ENCODE measurements at regions of chr15 and their contacts with region 1.

Region 1: DNA sequence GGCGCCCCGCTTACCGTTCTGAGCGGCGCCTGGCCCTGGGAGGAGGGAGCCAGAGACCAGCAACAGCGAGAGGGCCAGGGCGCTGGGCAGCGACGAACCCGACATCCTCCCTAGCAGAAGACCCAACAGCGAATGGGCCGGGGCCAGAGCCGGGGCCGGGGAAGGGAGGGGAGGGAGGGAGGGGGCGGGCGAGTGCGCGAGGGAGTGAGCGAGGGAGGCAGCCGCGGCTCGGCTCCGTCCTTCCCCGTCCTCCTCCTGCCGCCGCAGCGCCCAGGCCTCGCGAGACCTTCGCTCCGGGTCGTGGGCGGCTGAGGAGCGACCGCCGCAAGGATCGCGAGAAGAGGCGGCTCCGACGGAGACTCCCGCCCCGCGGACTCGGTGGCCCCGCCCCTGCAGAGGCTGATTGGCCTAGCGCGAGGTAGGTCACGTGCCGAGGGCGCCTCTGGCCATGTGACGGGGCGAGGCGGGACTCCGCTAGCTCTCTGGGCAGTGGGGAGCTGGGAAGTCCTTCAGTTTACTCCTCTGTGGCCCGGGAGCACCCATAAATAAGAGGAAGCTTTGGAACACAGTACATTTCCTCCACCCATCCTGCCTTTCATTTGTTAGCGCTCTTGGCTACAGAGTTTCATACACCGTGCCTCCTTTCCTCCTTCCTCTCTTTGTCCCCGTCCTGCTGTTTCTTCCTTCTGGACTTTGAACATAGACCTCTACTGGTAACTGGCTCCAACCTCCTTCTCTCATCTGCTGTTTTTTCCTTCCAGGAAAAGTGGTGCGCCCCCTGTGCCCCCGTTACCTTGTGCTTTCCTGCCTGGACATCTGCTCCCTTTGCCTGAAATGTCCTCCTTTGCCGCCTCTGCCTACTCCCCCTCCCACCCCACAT is at the start of gene NPTN:
- DNase-seq: peak; percentile 96 to 98
- ATAC-seq: peak; percentile 87 to 94
- H3K4me3 ChIP-seq: peak within 1 kb of the TSS; percentile 96
- H3K27ac ChIP-seq: peak within 1 kb of the TSS; percentile 95 to 96
- H3K4me1 ChIP-seq: peaks cover 51% of the 10 kb centered on the region
- CTCF ChIP-seq: peak; percentile 13; the same call in 1 of the 3 replicates
- EP300 ChIP-seq: no peak
- POLR2A ChIP-seq: peak; percentile 87
- RAD21 ChIP-seq: no peak
- polyA plus RNA-seq, gene NPTN: 201 and 253 TPM in 2 replicates

Region 2: GRCh38 chr15:73105064-73105463 is 528.3 kb before region 1 on chr15:
- CTCF ChIA-PET with region 1: no interaction called
- POLR2A ChIA-PET with region 1: no interaction called
- DNase-seq: no peak
- ATAC-seq: no peak
- H3K4me3 ChIP-seq: no peak overlapping the region
- H3K27ac ChIP-seq: no peak overlapping the region
- H3K4me1 ChIP-seq: no peaks in the 10 kb centered on the region
- CTCF ChIP-seq: no peak
- EP300 ChIP-seq: no peak
- POLR2A ChIP-seq: no peak
- RAD21 ChIP-seq: no peak

Region 3: GRCh38 chr15:73305331-73306211 is 327.8 kb before region 1 on chr15:
- CTCF ChIA-PET with region 1: interaction called, 79 read pairs
- POLR2A ChIA-PET with region 1: no interaction called
- DNase-seq: peak; percentile 81 to 86
- ATAC-seq: peak; percentile 91 to 95
- H3K4me3 ChIP-seq: no peak overlapping the region
- H3K27ac ChIP-seq: no peak overlapping the region
- H3K4me1 ChIP-seq: no peaks in the 10 kb centered on the region
- CTCF ChIP-seq: peak; percentile 83
- EP300 ChIP-seq: no peak
- POLR2A ChIP-seq: no peak
- RAD21 ChIP-seq: peak; percentile 89 to 95

Region 4: GRCh38 chr15:73573572-73573971 is 59.8 kb before region 1 on chr15:
- CTCF ChIA-PET with region 1: interaction called, 211 read pairs
- POLR2A ChIA-PET with region 1: interaction called, 3 read pairs
- DNase-seq: no peak
- ATAC-seq: no peak
- H3K4me3 ChIP-seq: no peak overlapping the region
- H3K27ac ChIP-seq: no peak overlapping the region
- H3K4me1 ChIP-seq: no peaks in the 10 kb centered on the region
- CTCF ChIP-seq: no peak
- EP300 ChIP-seq: no peak
- POLR2A ChIP-seq: no peak
- RAD21 ChIP-seq: no peak

Region 5: GRCh38 chr15:73601451-73602445 is 31.6 kb before region 1 on chr15:
- CTCF ChIA-PET with region 1: interaction called, 99 read pairs
- POLR2A ChIA-PET with region 1: interaction called, 21 read pairs
- DNase-seq: peak; percentile 17 to 42
- ATAC-seq: peak; percentile 74 to 86
- H3K4me3 ChIP-seq: 0 out of 3 replicates have a peak overlapping the region, but pooled peaks have one; percentile 12
- H3K27ac ChIP-seq: peak overlapping the region; percentile 45 to 62
- H3K4me1 ChIP-seq: peaks cover 41% of the 10 kb centered on the region
- CTCF ChIP-seq: no peak
- EP300 ChIP-seq: no peak
- POLR2A ChIP-seq: no peak
- RAD21 ChIP-seq: no peak

Region 6: GRCh38 chr15:73660455-73660854 is 27.1 kb after region 1 on chr15:
- CTCF ChIA-PET with region 1: interaction called, 17 read pairs
- POLR2A ChIA-PET with region 1: no interaction called
- DNase-seq: no peak
- ATAC-seq: no peak
- H3K4me3 ChIP-seq: no peak overlapping the region
- H3K27ac ChIP-seq: no peak overlapping the region
- H3K4me1 ChIP-seq: no peaks in the 10 kb centered on the region
- CTCF ChIP-seq: no peak
- EP300 ChIP-seq: no peak
- POLR2A ChIP-seq: no peak
- RAD21 ChIP-seq: no peak

Region 7: DNA sequence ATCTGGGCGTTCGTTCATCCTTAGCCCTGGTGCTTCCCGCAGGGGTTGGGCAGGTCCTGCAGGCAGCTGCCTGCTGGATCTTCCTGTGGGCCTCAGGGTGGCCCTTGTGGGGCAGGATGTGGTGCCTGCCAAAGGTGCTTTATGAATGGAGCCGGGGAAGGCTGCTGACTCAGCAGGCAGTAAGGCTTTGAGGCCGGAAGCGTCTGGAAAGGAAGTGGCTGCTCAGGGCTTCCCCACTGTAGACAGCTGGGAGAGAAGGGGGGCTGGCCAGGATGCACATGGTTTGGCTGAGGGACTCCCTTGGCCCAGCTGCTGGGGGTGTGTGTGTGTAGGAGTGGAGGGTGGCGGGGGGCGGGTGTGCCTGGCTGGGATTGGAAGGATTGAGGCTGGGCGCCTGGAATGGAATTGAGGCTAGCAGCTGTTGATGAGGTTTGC is 63.7 kb after region 1 on chr15:
- CTCF ChIA-PET with region 1: interaction called, 214 read pairs
- POLR2A ChIA-PET with region 1: interaction called, 5 read pairs
- DNase-seq: no peak
- ATAC-seq: no peak
- H3K4me3 ChIP-seq: no peak overlapping the region
- H3K27ac ChIP-seq: no peak overlapping the region
- H3K4me1 ChIP-seq: no peaks in the 10 kb centered on the region
- CTCF ChIP-seq: no peak
- EP300 ChIP-seq: no peak
- POLR2A ChIP-seq: no peak
- RAD21 ChIP-seq: no peak